Left lung (tissue), 14 donors: ENCODE measurements at regions of chr19 and their contacts with region 1.

Region 1: DNA sequence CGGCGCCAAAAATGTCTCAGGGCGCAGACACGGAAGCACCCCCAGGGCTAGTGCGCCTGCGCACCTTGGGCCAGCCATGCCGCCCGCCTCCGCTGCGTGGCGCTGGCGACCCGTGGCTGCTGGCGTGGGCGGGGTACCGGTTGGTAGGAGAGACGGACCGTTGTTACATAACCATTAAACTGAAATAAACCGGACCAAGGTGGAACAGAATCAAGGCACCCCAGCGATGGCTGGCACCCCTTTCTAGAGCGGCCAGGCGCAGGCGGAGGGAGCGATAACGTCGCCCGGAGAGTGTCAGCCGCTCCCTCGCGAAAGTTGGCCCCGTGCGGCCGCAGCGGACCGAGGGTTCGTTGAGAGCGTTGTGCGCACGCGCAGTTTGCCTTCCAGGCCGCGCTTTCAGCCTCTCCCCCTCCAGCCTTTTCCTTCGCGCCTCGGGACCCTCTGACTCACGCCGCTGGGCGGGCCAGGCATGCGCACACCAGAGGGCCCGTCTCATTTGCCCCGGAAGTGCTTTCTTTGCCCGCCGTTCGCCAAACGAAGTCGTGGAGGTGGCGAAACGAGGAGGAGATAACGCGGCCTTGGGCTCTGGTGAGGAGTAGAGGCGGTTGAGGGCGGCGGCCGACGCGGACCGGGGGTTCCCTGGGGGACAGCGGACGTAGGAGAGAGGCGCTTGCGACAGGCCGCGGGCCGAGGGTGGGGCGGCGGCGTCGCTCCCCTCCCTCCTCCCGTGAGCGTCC is at the starts of genes PLEKHJ1 and SF3A2:
- DNase-seq: peak; percentile 96 to 99 (median 99)
- ATAC-seq: peak; percentile 91
- H3K4me3 ChIP-seq: peak within 1 kb of the TSS; percentile 83 to 98
- H3K27ac ChIP-seq: peak within 1 kb of the TSS; percentile 98 to 100
- H3K4me1 ChIP-seq: peaks cover 45 to 77% of the 10 kb centered on the region in 2 donors
- H3K27me3 ChIP-seq: no peaks in the 10 kb centered on the region
- CTCF ChIP-seq: peak; percentile 96 to 98
- polyA plus RNA-seq, gene PLEKHJ1: 44.0 to 58.6 (median 55.1) TPM
- polyA plus RNA-seq, gene SF3A2: 63.3 to 81.5 (median 75.2) TPM

Region 2: DNA sequence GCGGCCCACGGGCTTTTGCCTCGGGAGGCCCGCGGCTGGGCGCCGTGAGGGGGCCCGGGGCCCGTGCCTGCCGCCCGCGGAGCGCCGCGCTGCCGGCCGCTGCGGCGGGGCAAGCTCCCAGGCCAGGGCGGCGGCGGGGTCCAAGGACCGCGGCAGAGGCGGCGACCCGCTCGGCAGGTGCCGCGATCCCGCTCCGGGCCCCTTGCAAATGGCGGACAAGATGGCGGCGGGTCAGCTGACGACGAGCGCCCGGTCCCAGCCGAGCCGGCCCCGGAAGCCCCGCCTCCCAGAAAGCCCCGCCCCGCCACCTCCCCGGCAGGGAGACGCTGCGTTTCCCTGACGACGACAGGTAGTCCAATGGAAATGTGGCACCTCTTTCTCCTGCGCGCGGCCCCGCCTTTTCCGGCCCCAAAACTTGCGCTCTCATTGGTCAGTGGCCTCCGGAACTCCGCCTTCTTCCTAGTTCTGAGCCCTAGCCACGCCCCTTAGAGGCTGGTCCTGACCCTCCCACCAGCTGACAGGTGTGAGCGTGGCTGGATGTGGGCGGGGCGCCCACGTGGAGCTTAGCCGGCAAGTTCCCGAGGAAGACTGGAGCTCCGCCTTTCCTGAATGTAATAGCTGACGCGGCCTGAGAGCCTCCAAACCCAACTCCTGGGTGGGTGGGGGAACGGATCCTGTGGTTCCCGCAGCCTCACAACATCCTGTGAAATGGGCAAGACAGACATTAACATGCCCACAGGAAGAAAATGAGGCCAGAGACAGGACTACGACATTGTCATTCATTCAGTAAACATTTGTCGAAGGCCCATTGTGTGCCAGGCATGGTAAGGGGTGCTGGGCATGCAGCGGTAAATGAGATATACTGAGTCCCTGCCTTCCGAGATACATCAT is 84.9 kb before region 1 on chr19 and contains the start of gene AP3D1:
- intact Hi-C with region 1: loop called in 1 of 2 experiments (anchors 10 kb)
- DNase-seq: peak; percentile 98 to 100 (median 100)
- ATAC-seq: peak; percentile 96
- H3K4me3 ChIP-seq: peak within 1 kb of the TSS; percentile 99 to 100
- H3K27ac ChIP-seq: peak within 1 kb of the TSS; percentile 81 to 94
- H3K4me1 ChIP-seq: peaks cover 13 to 58% of the 10 kb centered on the region in 2 donors
- H3K27me3 ChIP-seq: no peaks in the 10 kb centered on the region
- CTCF ChIP-seq: no peak
- polyA plus RNA-seq, gene AP3D1: 68.8 to 90.0 (median 79.2) TPM

Region 3: GRCh38 chr19:2273356-2274184 is 37.1 kb after region 1 on chr19:
- intact Hi-C with region 1: loop called (anchors 5 kb)
- DNase-seq: peak in 3 of 4 donors; percentile 70 to 94 (median 76)
- ATAC-seq: peak; percentile 19
- H3K4me3 ChIP-seq: peak overlapping the region in 1 of 2 donors; percentile 99
- H3K27ac ChIP-seq: peak overlapping the region; percentile 63 to 77
- H3K4me1 ChIP-seq: peaks cover 38 to 67% of the 10 kb centered on the region in 2 donors
- H3K27me3 ChIP-seq: no peaks in the 10 kb centered on the region
- CTCF ChIP-seq: peak; percentile 96 to 97